ENCODE measurements at regions of chr12 and their contacts with region 1.

Region 1: DNA sequence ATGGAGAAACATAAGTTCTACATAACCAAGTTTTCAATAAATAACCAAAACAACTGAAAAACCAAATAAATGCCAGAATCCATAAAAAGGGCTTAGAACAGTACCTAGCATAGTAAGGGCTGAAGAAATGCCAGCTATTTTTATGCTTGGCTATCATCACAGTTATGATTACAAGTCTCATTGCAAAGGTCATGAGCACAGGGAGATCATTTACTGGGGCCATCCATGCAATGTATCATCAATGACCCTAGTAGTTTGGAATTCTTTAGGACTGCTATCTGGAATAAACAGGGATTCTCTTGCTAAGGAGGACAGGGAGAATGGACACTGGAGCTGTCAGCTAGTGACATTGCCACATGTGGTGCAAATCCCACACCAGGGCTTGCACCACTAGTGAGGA is 92.5 kb upstream of the NAP1L1 start:
- DNase-seq: no peak
- H3K4me3 ChIP-seq: no peak overlapping the region
- H3K27ac ChIP-seq: no peak overlapping the region
- H3K4me1 ChIP-seq: no peaks in the 10 kb centered on the region
- H3K27me3 ChIP-seq: no peaks in the 10 kb centered on the region
- CTCF ChIP-seq: no peak

Region 2: DNA sequence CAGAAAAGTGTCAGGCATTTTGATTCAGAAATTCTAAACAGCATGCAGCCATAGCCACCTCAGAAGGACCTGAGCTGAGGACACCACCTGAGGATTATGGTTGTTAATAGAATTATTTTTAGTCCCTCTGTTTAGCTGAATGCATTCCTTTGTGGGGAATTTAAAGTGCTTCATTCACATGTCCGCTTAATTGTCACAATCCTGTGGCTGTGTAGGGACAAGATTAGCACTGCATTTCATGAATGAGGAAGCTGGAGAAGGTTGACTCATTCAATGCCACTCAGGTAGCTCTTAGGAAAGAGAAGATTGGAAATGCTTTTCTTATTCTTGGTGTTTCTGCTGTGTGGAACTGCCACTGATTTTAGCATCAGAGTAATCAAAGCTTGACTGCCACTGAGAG is 623.5 kb before region 1 on chr12:
- CTCF ChIA-PET with region 1: no interaction called
- dilution Hi-C with region 1: no loop called
- in situ Hi-C with region 1: no loop called
- intact Hi-C with region 1: loop called (anchors 10 kb)
- DNase-seq: no peak
- H3K4me3 ChIP-seq: no peak overlapping the region
- H3K27ac ChIP-seq: no peak overlapping the region
- H3K4me1 ChIP-seq: peaks cover 11% of the 10 kb centered on the region
- H3K27me3 ChIP-seq: no peaks in the 10 kb centered on the region
- CTCF ChIP-seq: no peak

Region 3: GRCh38 chr12:76106631-76107030 is 70.3 kb before region 1 on chr12:
- CTCF ChIA-PET with region 1: no interaction called
- dilution Hi-C with region 1: no loop called
- in situ Hi-C with region 1: no loop called
- intact Hi-C with region 1: no loop called
- DNase-seq: no peak
- H3K4me3 ChIP-seq: no peak overlapping the region
- H3K27ac ChIP-seq: no peak overlapping the region
- H3K4me1 ChIP-seq: no peaks in the 10 kb centered on the region
- H3K27me3 ChIP-seq: no peaks in the 10 kb centered on the region
- CTCF ChIP-seq: no peak